Adrenal gland (tissue), 19 donors: ENCODE measurements at regions of chr1 and their contacts with region 1.

Region 1: GRCh38 chr1:47257224-47257623 is 25.2 kb upstream of the TAL1 start:
- DNase-seq: no peak
- H3K4me3 ChIP-seq: no peak overlapping the region
- H3K27ac ChIP-seq: no peak overlapping the region
- H3K4me1 ChIP-seq: no peaks in the 10 kb centered on the region
- H3K27me3 ChIP-seq: no peaks in the 10 kb centered on the region
- CTCF ChIP-seq: no peak
- POLR2A ChIP-seq: no peak

Region 2: DNA sequence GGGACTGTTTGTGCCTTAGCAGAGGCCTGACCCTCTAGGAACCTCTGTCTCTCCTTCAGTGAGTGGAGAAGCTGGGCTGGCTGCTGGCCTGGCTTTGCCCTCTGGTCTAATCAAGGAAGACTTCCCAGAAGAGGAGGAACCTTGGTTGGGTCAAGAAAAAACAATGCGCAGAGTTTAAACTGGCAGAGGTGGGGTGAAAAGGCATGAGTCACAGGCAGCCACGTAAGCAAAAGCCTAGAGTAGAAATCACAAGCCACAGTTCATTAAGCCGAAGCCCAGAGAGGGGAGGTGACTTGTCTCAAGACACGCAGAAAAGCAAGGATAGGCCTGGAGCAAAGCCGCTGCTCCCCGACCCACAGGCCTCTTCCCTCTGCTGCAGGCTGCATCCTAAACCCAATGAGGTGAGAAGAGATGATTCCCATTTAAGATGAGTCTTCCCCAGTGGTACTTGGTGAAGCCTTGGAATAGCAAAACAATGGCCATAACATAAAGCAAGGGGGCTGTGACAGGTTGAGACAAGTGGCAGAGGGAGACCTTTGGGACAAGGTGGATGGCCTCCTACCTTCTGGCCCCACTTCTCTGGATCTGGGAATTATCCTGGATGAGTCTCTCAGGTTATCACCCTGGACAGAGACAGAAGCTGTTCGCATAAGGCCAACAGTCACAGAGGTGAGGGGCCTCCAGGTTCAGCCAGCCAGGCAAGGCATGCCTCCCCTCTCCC is 75.1 kb before region 1 on chr1:
- intact Hi-C with region 1: loop called in 1 of 2 experiments (anchors 5 kb)
- DNase-seq: no peak
- H3K4me3 ChIP-seq: no peak overlapping the region
- H3K27ac ChIP-seq: no peak overlapping the region
- H3K4me1 ChIP-seq: peaks cover 5 to 11% of the 10 kb centered on the region in 2 donors
- H3K27me3 ChIP-seq: peaks cover 8% of the 10 kb centered on the region
- CTCF ChIP-seq: no peak
- POLR2A ChIP-seq: no peak